Breast epithelium (tissue), 4 donors: ENCODE measurements at regions of chr7 and their contacts with region 1.

Region 1: DNA sequence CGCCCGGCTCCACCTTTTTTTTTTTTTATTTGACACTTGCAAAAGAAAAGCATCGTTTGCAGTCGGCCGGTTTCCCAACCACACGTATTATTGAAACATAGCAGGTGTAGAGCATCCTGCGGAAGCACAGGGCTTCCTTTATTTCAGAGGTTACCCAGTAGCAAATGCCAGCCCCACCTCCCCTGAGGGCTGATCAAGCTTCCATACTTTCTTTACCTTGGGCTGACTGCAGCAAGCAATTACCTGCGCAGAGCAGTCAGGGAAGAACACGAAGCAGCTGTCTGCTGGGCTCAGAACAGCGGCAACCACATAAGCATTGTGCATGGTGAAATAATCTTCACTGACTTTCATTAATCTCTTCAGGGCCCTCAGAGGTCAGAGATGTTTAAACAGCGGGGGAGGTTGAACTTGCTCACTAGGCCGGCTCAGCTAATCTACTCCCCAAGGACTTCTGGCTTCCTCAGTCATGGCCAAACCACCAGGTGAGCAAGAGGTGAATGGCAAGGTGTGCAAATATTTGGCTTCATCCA is 784.7 kb upstream of the AUTS2 start:
- DNase-seq: peak in 1 of 2 donors; percentile 18
- H3K4me3 ChIP-seq: no peak overlapping the region
- H3K27ac ChIP-seq: no peak overlapping the region
- H3K4me1 ChIP-seq: no peaks in the 10 kb centered on the region
- H3K27me3 ChIP-seq: no peaks in the 10 kb centered on the region
- CTCF ChIP-seq: no peak
- POLR2A ChIP-seq: no peak

Region 2: GRCh38 chr7:68800316-68800715 is 13.3 kb before region 1 on chr7:
- intact Hi-C with region 1: loop called (anchors 1 kb)
- DNase-seq: no peak
- H3K4me3 ChIP-seq: no peak overlapping the region
- H3K27ac ChIP-seq: no peak overlapping the region
- H3K4me1 ChIP-seq: no peaks in the 10 kb centered on the region
- H3K27me3 ChIP-seq: no peaks in the 10 kb centered on the region
- CTCF ChIP-seq: no peak
- POLR2A ChIP-seq: no peak